Endothelial cell of umbilical vein (primary cell): ENCODE measurements at regions of chr12 and their contacts with region 1.

Region 1: DNA sequence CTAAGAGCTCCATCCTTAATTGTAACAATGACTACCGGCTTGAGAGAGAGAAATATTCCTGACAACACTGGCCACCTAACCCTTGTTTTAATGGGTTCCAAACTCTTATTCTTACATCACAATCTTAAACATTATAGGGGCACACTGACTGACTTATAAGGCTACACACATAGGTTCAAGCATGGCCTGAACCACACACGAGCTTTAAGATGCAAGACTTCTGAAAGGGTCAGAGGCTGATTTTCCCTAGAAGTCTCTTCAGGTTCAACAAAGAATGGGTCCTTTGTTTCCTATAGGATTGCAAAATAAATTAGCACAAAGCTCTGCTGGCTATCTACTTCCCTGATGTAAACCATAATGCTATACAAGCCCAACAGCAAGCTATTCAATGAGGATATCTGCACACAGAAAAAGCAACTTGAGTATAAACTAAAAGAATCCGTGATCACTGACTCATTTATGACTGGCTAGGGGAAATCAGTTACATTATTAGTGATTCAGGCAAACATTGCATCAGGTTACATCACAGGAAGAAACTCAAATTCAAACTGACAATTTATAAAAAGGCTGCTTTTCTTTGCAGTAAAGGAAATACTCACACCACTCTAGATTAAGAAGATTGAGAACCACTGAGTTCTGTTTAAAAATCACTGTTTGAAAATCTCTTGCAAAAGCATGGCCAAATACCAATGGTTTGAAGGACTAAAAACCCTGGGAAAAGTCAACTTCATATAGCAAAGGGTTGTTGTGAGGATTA is 8.5 kb downstream of the BTG1 start:
- DNase-seq: peak; percentile 68
- H3K4me3 ChIP-seq: no peak overlapping the region
- H3K27ac ChIP-seq: peak overlapping the region; percentile 49
- H3K4me1 ChIP-seq: peaks cover 59% of the 10 kb centered on the region
- H3K27me3 ChIP-seq: no peaks in the 10 kb centered on the region
- CTCF ChIP-seq: no peak
- POLR2A ChIP-seq: no peak

Region 2: DNA sequence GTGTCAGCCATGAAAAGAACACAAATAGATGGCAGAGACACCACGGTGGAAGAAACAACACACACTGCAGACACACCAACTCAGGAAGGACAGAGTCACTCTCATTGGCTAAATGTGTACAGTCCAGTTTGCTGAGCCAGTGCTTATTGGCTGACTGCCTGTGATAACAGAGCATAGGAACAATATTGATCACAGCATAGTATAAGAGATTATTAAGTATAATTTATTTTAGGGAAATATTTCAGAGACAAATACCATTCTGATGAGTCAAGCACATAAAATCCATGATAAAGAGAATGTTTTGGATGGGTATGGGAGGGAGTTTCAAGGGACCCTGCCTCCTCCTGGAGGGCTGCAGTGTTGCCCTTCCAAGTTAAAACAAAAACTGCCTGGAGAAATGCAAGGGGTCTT is 42.4 kb before region 1 on chr12:
- CTCF ChIA-PET with region 1: no interaction called
- POLR2A ChIA-PET with region 1: no interaction called
- dilution Hi-C with region 1: no loop called
- intact Hi-C with region 1: loop called (anchors 2 kb)
- DNase-seq: peak; percentile 44
- H3K4me3 ChIP-seq: no peak overlapping the region
- H3K27ac ChIP-seq: peak overlapping the region; percentile 49
- H3K4me1 ChIP-seq: peaks cover 18% of the 10 kb centered on the region
- H3K27me3 ChIP-seq: no peaks in the 10 kb centered on the region
- CTCF ChIP-seq: peak in 1 of 2 donors; percentile 10
- POLR2A ChIP-seq: no peak

Region 3: GRCh38 chr12:92123780-92124688 is 13.1 kb before region 1 on chr12:
- CTCF ChIA-PET with region 1: interaction called, 10 read pairs
- POLR2A ChIA-PET with region 1: no interaction called
- dilution Hi-C with region 1: no loop called
- intact Hi-C with region 1: no loop called
- DNase-seq: no peak
- H3K4me3 ChIP-seq: no peak overlapping the region
- H3K27ac ChIP-seq: no peak overlapping the region
- H3K4me1 ChIP-seq: no peaks in the 10 kb centered on the region
- H3K27me3 ChIP-seq: no peaks in the 10 kb centered on the region
- CTCF ChIP-seq: no peak
- POLR2A ChIP-seq: no peak

Region 4: DNA sequence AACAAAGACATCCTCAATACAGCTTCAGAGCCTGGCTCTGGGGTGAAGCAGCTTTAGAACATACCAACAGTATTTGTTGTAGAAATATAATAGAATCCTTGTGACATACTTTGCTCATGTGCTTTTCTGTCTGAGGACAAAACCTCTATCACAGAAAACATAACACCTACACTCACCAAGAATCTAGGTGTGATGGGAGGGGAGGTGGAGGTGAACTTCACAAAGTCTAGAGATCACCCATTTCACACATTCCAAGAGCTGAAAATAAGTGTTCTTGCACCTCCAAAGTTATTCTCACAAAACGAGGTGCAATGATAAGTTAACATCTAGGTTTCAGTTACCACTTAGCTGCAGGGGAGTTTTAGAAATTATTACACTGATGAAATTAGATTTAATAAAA is 41.2 kb after region 1 on chr12:
- CTCF ChIA-PET with region 1: no interaction called
- POLR2A ChIA-PET with region 1: no interaction called
- dilution Hi-C with region 1: no loop called
- intact Hi-C with region 1: no loop called
- DNase-seq: no peak
- H3K4me3 ChIP-seq: no peak overlapping the region
- H3K27ac ChIP-seq: no peak overlapping the region
- H3K4me1 ChIP-seq: no peaks in the 10 kb centered on the region
- H3K27me3 ChIP-seq: peaks cover 0 to 5% of the 10 kb centered on the region in 2 experiments
- CTCF ChIP-seq: no peak
- POLR2A ChIP-seq: no peak

Region 5: DNA sequence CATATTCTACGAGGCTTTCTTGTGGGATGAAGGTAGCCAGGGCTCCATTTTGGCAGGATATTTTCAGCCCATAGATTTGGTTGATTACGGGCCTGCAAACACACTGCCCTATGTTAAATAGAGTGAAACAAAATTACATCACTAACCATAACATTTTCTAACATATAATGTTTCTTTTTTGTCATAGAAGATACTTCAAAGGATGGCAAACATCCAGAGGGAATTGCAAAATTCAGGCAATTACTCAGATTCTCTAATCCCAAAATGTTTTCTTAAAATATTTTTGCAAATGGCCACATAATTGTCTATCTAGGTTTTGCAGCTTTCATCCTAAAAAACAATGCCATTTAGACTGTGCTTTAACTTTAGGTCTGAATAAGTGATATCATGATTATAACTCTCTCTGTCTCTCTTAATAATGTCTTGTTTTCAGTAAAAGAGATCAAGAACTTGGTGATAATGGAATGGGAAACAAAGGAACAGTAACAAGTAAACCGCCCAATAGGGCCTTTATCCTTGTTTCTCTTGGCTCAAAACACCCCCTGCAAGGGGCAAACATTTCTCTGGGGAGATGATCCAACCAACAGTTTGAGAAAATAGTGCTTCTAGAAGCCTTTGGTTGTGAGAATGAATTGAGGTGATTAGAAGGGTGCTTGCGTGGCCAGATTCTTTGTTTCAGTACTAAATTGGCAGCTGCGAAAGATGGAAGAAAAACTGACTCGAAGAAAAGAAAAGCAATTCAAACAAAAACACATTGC is 62.9 kb after region 1 on chr12:
- CTCF ChIA-PET with region 1: no interaction called
- POLR2A ChIA-PET with region 1: no interaction called
- dilution Hi-C with region 1: no loop called
- intact Hi-C with region 1: no loop called
- DNase-seq: peak; percentile 35
- H3K4me3 ChIP-seq: no peak overlapping the region
- H3K27ac ChIP-seq: no peak overlapping the region
- H3K4me1 ChIP-seq: peaks cover 4% of the 10 kb centered on the region
- H3K27me3 ChIP-seq: peaks cover 0 to 3% of the 10 kb centered on the region in 2 experiments
- CTCF ChIP-seq: no peak
- POLR2A ChIP-seq: no peak

Region 6: DNA sequence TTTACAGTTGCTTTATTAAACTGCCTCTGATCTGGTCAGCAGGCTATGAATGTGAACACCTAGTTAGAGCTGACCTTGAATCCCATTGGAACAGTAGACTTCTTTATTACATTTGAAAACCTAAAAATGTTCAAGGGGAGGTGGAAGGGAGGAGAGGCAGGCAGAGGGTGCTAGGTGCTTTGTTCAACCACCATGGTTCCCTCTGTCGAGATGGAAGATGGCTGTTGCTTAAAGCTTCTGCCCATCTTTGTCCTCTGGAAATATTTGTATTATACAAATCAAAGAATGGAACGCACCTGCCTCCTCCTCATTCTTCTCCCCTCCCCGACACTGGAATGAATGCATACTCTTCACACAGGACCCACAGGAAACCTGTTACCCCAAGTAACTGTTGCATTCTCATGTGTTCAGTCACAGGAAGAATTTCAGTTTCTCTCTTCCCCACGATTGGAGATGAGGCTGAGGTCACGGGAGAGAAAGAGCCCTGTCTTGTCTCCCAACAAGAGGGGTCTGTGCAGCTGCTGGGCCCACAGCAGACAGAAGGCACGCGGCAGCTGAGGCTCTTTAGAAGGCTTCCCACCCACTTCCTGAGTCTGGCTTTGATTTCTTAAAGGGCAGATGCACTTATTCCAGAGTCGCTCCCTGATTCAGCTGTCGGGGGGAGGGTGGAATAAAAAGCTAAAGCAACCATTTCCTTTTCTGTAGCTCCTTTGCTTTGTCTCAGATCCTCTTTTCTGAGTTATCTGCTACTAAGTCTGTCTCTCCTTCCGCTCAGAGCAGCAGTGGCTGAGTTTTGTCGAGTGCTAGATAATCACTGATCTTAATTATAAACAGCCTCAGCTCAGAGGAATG is 226.4 kb after region 1 on chr12:
- CTCF ChIA-PET with region 1: no interaction called
- POLR2A ChIA-PET with region 1: no interaction called
- dilution Hi-C with region 1: no loop called
- intact Hi-C with region 1: no loop called
- DNase-seq: peak; percentile 31
- H3K4me3 ChIP-seq: no peak overlapping the region
- H3K27ac ChIP-seq: no peak overlapping the region
- H3K4me1 ChIP-seq: peaks cover 3% of the 10 kb centered on the region
- H3K27me3 ChIP-seq: no peaks in the 10 kb centered on the region
- CTCF ChIP-seq: no peak
- POLR2A ChIP-seq: no peak